ENCODE measurements at regions of chr9 and their contacts with region 1.

Region 1: GRCh38 chr9:37746848-37747753 is 6.5 kb upstream of the TRMT10B start:
- DNase-seq: peak; percentile 87 to 89 (median 87)
- ATAC-seq: peak; percentile 91
- H3K4me3 ChIP-seq: no peak overlapping the region
- H3K27ac ChIP-seq: no peak overlapping the region
- H3K4me1 ChIP-seq: peaks cover 11 to 17% of the 10 kb centered on the region in 2 experiments; a peak in 4 of 5 replicates
- H3K27me3 ChIP-seq: peaks cover 0 to 16% of the 10 kb centered on the region in 2 experiments; a peak in 3 of 5 replicates
- CTCF ChIP-seq: peak; percentile 96 to 98 (median 98)
- EP300 ChIP-seq: 0 out of 2 replicates have a peak, but pooled peaks have one; percentile 28
- POLR2A ChIP-seq: no peak
- RAD21 ChIP-seq: peak; percentile 81 to 95

Region 2: GRCh38 chr9:37592108-37592951 is 154.8 kb before region 1 on chr9 and contains the start of gene TOMM5:
- CTCF ChIA-PET with region 1: no interaction called
- POLR2A ChIA-PET with region 1: no interaction called
- in situ Hi-C with region 1: no loop called
- intact Hi-C with region 1: loop called (anchors 5 kb)
- DNase-seq: peak; percentile 88 to 97 (median 90)
- ATAC-seq: peak; percentile 92
- H3K4me3 ChIP-seq: peak within 1 kb of the TSS; percentile 57
- H3K27ac ChIP-seq: peak within 1 kb of the TSS; percentile 87
- H3K4me1 ChIP-seq: peaks cover 20 to 31% of the 10 kb centered on the region in 2 experiments
- H3K27me3 ChIP-seq: no peaks in the 10 kb centered on the region
- CTCF ChIP-seq: no peak; a peak in 1 of 6 replicates
- EP300 ChIP-seq: peak; percentile 52
- POLR2A ChIP-seq: peak; percentile 99
- RAD21 ChIP-seq: no peak
- polyA plus RNA-seq, gene TOMM5: 1,739 to 1,742 TPM

Region 3: GRCh38 chr9:37784616-37785483 is 37.7 kb after region 1 on chr9 and contains the start of gene EXOSC3:
- CTCF ChIA-PET with region 1: no interaction called
- POLR2A ChIA-PET with region 1: interaction called, 4 read pairs
- in situ Hi-C with region 1: no loop called
- intact Hi-C with region 1: loop called (anchors 1 kb)
- DNase-seq: peak; percentile 88 to 98 (median 90)
- ATAC-seq: peak; percentile 97
- H3K4me3 ChIP-seq: peak within 1 kb of the TSS; percentile 82
- H3K27ac ChIP-seq: peak within 1 kb of the TSS; percentile 91
- H3K4me1 ChIP-seq: peaks cover 8 to 24% of the 10 kb centered on the region in 2 experiments; a peak in 4 of 5 replicates
- H3K27me3 ChIP-seq: no peaks in the 10 kb centered on the region
- CTCF ChIP-seq: peak; percentile 26 to 41 (median 29); a peak in 3 of 6 replicates
- EP300 ChIP-seq: no peak
- POLR2A ChIP-seq: peak; percentile 98
- RAD21 ChIP-seq: peak in 1 of 2 experiments; percentile 38; a peak in 1 of 4 replicates
- polyA plus RNA-seq, gene EXOSC3: 18.5 to 29.6 TPM

Region 4: GRCh38 chr9:37859043-37859442 is 111.9 kb after region 1 on chr9:
- CTCF ChIA-PET with region 1: no interaction called
- POLR2A ChIA-PET with region 1: no interaction called
- in situ Hi-C with region 1: no loop called
- intact Hi-C with region 1: no loop called
- DNase-seq: peak in 2 of 4 experiments; percentile 16 to 19
- ATAC-seq: peak; percentile 57
- H3K4me3 ChIP-seq: no peak overlapping the region
- H3K27ac ChIP-seq: no peak overlapping the region
- H3K4me1 ChIP-seq: no peaks in the 10 kb centered on the region
- H3K27me3 ChIP-seq: no peaks in the 10 kb centered on the region
- CTCF ChIP-seq: peak in 2 of 3 experiments; percentile 17 to 44; a peak in 3 of 6 replicates
- EP300 ChIP-seq: no peak
- POLR2A ChIP-seq: no peak
- RAD21 ChIP-seq: peak in 1 of 2 experiments; percentile 56; a peak in 2 of 4 replicates

Region 5: DNA sequence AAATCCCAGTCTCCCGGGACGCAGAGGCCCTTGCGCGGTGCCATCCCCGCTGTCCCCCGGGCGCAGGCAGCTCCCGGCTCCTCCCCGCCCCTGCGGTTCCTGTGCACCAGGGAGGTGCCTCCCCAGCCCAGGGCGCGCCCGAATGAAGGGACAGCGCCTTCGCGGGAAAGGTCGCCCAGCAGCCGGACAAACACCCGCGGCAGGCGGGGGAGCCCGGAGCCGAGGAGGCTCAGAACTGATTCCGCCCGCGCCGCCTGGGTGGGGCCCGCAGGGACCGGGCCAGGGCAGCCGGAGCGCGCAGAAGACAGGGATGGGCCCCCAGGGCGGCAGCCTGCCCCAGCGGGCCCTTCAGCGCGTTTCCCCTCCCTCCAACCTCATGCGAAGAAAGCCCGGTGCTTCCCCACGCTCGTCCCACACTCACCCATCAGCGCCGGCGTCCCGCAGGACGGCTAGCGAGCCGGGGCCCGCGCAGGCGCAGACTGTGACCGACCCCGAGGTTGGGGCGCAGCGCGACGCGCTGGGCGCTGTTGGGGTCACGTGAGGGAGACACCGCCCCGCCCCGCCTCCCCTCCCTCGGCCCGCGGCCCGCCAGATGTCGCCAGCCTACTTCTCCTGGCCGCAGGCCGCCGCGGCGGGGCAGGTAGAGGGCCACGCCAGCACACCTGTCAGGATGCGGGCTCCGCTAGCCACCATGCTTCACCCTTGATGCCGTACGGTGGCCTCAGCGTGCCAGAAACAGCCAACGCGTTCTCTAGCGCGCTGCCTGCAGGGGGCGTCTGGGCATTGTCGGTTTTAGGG is 156.7 kb after region 1 on chr9 and contains the start of gene SLC25A51:
- CTCF ChIA-PET with region 1: interaction called, 3 read pairs
- POLR2A ChIA-PET with region 1: no interaction called
- in situ Hi-C with region 1: loop called (anchors 10 kb)
- intact Hi-C with region 1: loop called (anchors 2 kb)
- DNase-seq: peak; percentile 96 to 99 (median 98)
- ATAC-seq: peak; percentile 90
- H3K4me3 ChIP-seq: peak within 1 kb of the TSS; percentile 86
- H3K27ac ChIP-seq: peak within 1 kb of the TSS; percentile 71
- H3K4me1 ChIP-seq: peaks cover 22 to 32% of the 10 kb centered on the region in 2 experiments
- H3K27me3 ChIP-seq: no peaks in the 10 kb centered on the region
- CTCF ChIP-seq: peak; percentile 95 to 99 (median 98)
- EP300 ChIP-seq: peak; percentile 41
- POLR2A ChIP-seq: peak; percentile 83
- RAD21 ChIP-seq: peak; percentile 80
- polyA plus RNA-seq, gene SLC25A51: 9.1 to 10.6 TPM

Region 6: GRCh38 chr9:38068866-38069629 is 321.9 kb after region 1 on chr9 and contains the start of gene SHB:
- CTCF ChIA-PET with region 1: no interaction called
- POLR2A ChIA-PET with region 1: no interaction called
- in situ Hi-C with region 1: no loop called
- intact Hi-C with region 1: loop called (anchors 10 kb)
- DNase-seq: peak; percentile 89 to 99 (median 98)
- ATAC-seq: peak; percentile 77
- H3K4me3 ChIP-seq: peak within 1 kb of the TSS; percentile 90
- H3K27ac ChIP-seq: peak within 1 kb of the TSS; percentile 81
- H3K4me1 ChIP-seq: peaks cover 39 to 49% of the 10 kb centered on the region in 2 experiments
- H3K27me3 ChIP-seq: no peaks in the 10 kb centered on the region; a peak in 1 of 5 replicates
- CTCF ChIP-seq: peak in 1 of 3 experiments; percentile 53; a peak in 1 of 6 replicates
- EP300 ChIP-seq: no peak
- POLR2A ChIP-seq: peak; percentile 62; the same call in 1 of the 2 replicates
- RAD21 ChIP-seq: peak in 1 of 2 experiments; percentile 59; a peak in 1 of 4 replicates
- polyA plus RNA-seq, gene SHB: 0.78 to 1.0 TPM

Region 7: GRCh38 chr9:38160613-38161215 is 413.6 kb after region 1 on chr9:
- CTCF ChIA-PET with region 1: no interaction called
- POLR2A ChIA-PET with region 1: no interaction called
- in situ Hi-C with region 1: no loop called
- intact Hi-C with region 1: loop called (anchors 10 kb)
- DNase-seq: peak; percentile 79 to 89 (median 86)
- ATAC-seq: peak; percentile 94
- H3K4me3 ChIP-seq: no peak overlapping the region
- H3K27ac ChIP-seq: no peak overlapping the region
- H3K4me1 ChIP-seq: no peaks in the 10 kb centered on the region
- H3K27me3 ChIP-seq: peaks cover 4 to 26% of the 10 kb centered on the region in 2 experiments; a peak in 4 of 5 replicates
- CTCF ChIP-seq: peak; percentile 88 to 92 (median 91)
- EP300 ChIP-seq: no peak
- POLR2A ChIP-seq: no peak
- RAD21 ChIP-seq: peak; percentile 75 to 82

Region 8: GRCh38 chr9:38362852-38363593 is 615.9 kb after region 1 on chr9:
- CTCF ChIA-PET with region 1: no interaction called
- POLR2A ChIA-PET with region 1: no interaction called
- in situ Hi-C with region 1: loop called (anchors 25 kb)
- intact Hi-C with region 1: loop called (anchors 1 kb)
- DNase-seq: peak; percentile 25 to 62 (median 46)
- ATAC-seq: peak; percentile 82
- H3K4me3 ChIP-seq: no peak overlapping the region
- H3K27ac ChIP-seq: no peak overlapping the region
- H3K4me1 ChIP-seq: peaks cover 0 to 4% of the 10 kb centered on the region in 2 experiments; a peak in 2 of 5 replicates
- H3K27me3 ChIP-seq: peaks cover 16 to 27% of the 10 kb centered on the region in 2 experiments
- CTCF ChIP-seq: peak; percentile 69 to 91 (median 86)
- EP300 ChIP-seq: no peak
- POLR2A ChIP-seq: no peak
- RAD21 ChIP-seq: peak; percentile 83 to 88